ENCODE measurements at regions of chr3 and their contacts with region 1.

Region 1: DNA sequence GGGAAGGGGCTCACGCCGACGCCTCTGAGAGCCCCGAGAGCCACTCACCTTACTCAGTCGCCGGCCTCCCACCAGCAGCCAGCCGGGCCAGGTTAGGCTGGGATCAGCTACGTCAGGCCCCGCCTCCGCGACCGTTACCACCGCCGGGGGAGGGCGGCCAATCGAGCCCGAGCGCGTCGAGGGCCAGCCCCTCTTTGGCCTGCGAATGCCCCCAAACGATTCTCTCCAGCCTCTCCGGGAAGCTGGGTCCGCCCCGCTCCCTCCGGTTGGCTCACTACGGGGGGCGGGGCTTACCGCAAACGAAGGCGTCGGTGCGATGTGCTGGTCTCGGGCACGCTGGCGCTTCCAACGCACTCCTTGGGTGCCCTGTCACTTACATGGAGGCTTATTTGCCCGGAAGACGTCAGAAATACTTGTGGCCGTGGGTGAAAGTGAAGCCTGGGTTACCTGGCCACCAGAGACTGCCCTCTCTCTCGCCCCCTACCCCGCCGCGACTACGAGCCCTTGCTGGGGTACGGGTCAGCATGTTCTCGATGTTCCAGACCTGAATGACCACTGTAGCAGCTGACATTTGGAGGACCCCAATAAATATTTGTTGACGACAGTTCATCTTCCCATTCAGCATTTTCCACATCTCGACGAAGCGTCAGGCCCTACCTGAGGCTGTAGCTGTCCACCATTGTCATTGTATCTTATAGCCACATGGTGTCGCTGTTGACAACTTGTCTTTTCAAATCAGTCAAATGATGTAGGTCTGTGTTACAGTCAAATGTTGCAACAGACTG is at the start of gene CEP70:
- DNase-seq: peak; percentile 90
- H3K4me3 Mint-ChIP-seq: peak within 1 kb of the TSS; percentile 96
- H3K27ac Mint-ChIP-seq: peak within 1 kb of the TSS; percentile 87
- H3K4me1 Mint-ChIP-seq: peaks cover 4% of the 10 kb centered on the region
- H3K27me3 Mint-ChIP-seq: no peaks in the 10 kb centered on the region
- total RNA-seq, gene CEP70: 16.3 to 20.4 TPM

Region 2: GRCh38 chr3:138417559-138417982 is 176.8 kb before region 1 on chr3:
- CTCF ChIA-PET with region 1: interaction called, 4 read pairs
- intact Hi-C with region 1: loop called (anchors 1 kb)
- DNase-seq: peak; percentile 86
- H3K4me3 Mint-ChIP-seq: no peak overlapping the region
- H3K27ac Mint-ChIP-seq: no peak overlapping the region
- H3K4me1 Mint-ChIP-seq: peaks cover 4% of the 10 kb centered on the region
- H3K27me3 Mint-ChIP-seq: peaks cover 6% of the 10 kb centered on the region

Region 3: DNA sequence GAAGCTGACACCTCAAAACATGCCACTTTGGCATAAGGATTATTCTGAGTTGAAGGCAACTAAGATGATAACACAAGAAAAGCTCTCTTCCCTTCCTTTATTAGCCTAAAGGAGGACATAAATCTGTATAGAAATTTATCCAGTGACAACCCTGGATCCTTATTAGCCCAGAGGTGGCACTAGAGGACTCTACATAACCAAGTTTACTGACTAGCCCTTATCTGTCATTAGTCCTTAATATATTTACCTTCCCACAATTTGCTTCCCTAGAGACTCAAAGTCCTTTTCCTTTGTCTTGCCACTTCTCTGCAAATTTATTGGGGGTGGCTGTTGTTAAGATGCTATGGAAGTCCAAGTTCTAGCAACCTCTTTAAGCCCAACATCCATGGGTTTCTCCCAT is 26.9 kb before region 1 on chr3:
- CTCF ChIA-PET with region 1: interaction called, 6 read pairs
- intact Hi-C with region 1: loop called (anchors 1 kb)
- DNase-seq: no peak
- H3K4me3 Mint-ChIP-seq: no peak overlapping the region
- H3K27ac Mint-ChIP-seq: no peak overlapping the region
- H3K4me1 Mint-ChIP-seq: peaks cover 12% of the 10 kb centered on the region
- H3K27me3 Mint-ChIP-seq: no peaks in the 10 kb centered on the region

Region 4: DNA sequence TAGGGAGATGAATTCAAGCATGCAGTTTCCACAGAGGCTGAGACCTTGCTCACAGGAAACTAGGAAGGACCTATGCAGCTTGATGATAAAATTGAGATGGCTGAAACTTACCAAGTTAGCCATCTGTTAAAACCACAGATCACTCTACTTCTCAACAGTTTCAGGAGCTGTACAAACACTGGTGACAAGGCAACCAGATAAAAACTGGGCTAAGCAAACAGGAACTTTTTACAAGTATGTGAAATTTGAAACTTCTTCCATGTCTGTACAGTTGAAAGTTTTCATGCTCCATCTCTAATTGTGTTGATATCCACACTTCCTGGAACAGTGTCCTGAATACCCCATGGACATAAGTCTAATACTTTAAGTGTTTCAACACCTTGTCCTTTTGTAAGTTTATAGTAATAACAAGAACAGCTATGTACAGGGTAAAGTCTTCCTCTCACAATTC is 92.5 kb after region 1 on chr3:
- CTCF ChIA-PET with region 1: interaction called, 4 read pairs
- intact Hi-C with region 1: loop called (anchors 1 kb)
- DNase-seq: no peak
- H3K4me3 Mint-ChIP-seq: no peak overlapping the region
- H3K27ac Mint-ChIP-seq: peak overlapping the region; percentile 61
- H3K4me1 Mint-ChIP-seq: peaks cover 15% of the 10 kb centered on the region
- H3K27me3 Mint-ChIP-seq: no peaks in the 10 kb centered on the region

Region 5: GRCh38 chr3:138834359-138835212 is 240.2 kb after region 1 on chr3 and contains the start of gene PIK3CB:
- CTCF ChIA-PET with region 1: no interaction called
- intact Hi-C with region 1: loop called (anchors 1 kb)
- DNase-seq: peak; percentile 89
- H3K4me3 Mint-ChIP-seq: peak within 1 kb of the TSS; percentile 98
- H3K27ac Mint-ChIP-seq: peak within 1 kb of the TSS; percentile 99
- H3K4me1 Mint-ChIP-seq: peaks cover 29% of the 10 kb centered on the region
- H3K27me3 Mint-ChIP-seq: no peaks in the 10 kb centered on the region
- total RNA-seq, gene PIK3CB: 19.2 to 20.6 TPM

Region 6: GRCh38 chr3:139329345-139329850 is 735.1 kb after region 1 on chr3:
- CTCF ChIA-PET with region 1: interaction called, 3 read pairs
- intact Hi-C with region 1: loop called (anchors 2 kb)
- DNase-seq: peak; percentile 93
- H3K4me3 Mint-ChIP-seq: peak overlapping the region; percentile 46
- H3K27ac Mint-ChIP-seq: no peak overlapping the region
- H3K4me1 Mint-ChIP-seq: peaks cover 15% of the 10 kb centered on the region
- H3K27me3 Mint-ChIP-seq: peaks cover 28% of the 10 kb centered on the region